ENCODE measurements at regions of chr11 and their contacts with region 1.

Region 1: DNA sequence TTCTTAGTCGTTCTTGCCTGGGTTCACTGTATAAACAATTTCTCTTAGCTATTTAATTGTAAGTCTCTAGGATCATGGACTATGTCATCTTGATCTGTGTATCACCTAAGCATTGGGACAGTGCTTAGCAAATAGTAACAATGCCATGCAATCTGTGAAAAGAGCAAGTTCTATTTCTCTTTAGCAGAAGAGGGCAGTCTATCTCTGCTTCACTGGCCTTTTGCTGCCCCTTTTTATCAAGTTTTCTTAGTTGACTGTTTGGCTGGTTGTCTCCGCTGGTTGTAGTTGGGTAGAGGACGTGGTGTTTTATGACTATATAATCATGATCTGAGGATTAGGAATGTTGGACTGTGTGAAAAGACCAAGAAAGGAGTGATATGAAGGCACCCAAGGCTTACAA is 315.0 kb downstream of the JRKL start:
- DNase-seq: peak; percentile 22
- ATAC-seq: peak; percentile 38; the same call in 1 of the 2 replicates
- H3K4me3 ChIP-seq: no peak overlapping the region
- H3K27ac ChIP-seq: no peak overlapping the region
- H3K4me1 ChIP-seq: no peaks in the 10 kb centered on the region
- H3K27me3 ChIP-seq: peaks cover 39% of the 10 kb centered on the region; the same call in 1 of the 2 replicates
- CTCF ChIP-seq: 0 out of 2 replicates have a peak, but pooled peaks have one; percentile 29

Region 2: GRCh38 chr11:96635655-96636054 is 69.2 kb before region 1 on chr11:
- CTCF ChIA-PET with region 1: no interaction called
- POLR2A ChIA-PET with region 1: no interaction called
- intact Hi-C with region 1: no loop called
- DNase-seq: no peak
- ATAC-seq: no peak
- H3K4me3 ChIP-seq: no peak overlapping the region
- H3K27ac ChIP-seq: no peak overlapping the region
- H3K4me1 ChIP-seq: no peaks in the 10 kb centered on the region
- H3K27me3 ChIP-seq: peaks cover 3% of the 10 kb centered on the region; the same call in 1 of the 2 replicates
- CTCF ChIP-seq: no peak

Region 3: DNA sequence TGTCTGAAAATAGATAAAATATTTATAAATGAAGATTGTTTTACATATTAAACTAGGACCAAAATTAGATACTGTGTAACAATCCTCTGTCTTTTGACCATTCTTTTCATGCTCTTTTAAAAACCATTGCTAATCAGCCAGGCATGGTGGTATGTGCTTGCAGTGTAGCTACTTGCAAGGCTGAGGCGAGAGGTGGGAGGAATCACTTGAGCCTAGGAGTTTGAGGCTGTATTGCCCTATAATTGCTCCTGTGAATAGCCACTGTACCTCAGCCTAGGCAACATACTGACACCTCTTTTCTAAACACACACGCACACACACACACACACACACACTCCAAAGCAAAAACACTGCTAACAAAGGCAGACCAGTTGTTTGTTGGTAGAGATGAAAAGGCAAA is 55.9 kb before region 1 on chr11:
- CTCF ChIA-PET with region 1: no interaction called
- POLR2A ChIA-PET with region 1: no interaction called
- intact Hi-C with region 1: no loop called
- DNase-seq: no peak
- ATAC-seq: no peak
- H3K4me3 ChIP-seq: no peak overlapping the region
- H3K27ac ChIP-seq: no peak overlapping the region
- H3K4me1 ChIP-seq: no peaks in the 10 kb centered on the region
- H3K27me3 ChIP-seq: peaks cover 49% of the 10 kb centered on the region
- CTCF ChIP-seq: no peak

Region 4: GRCh38 chr11:96794152-96794551 is 89.3 kb after region 1 on chr11:
- CTCF ChIA-PET with region 1: no interaction called
- POLR2A ChIA-PET with region 1: no interaction called
- intact Hi-C with region 1: loop called (anchors 2 kb)
- DNase-seq: peak; percentile 33
- ATAC-seq: peak; percentile 70
- H3K4me3 ChIP-seq: no peak overlapping the region
- H3K27ac ChIP-seq: no peak overlapping the region
- H3K4me1 ChIP-seq: no peaks in the 10 kb centered on the region
- H3K27me3 ChIP-seq: peaks cover 20% of the 10 kb centered on the region
- CTCF ChIP-seq: peak; percentile 47; the same call in 1 of the 2 replicates

Measured in PC-3 (cell line).